OCI-LY7 (cell line): ENCODE measurements at regions of chr12 and their contacts with region 1.

Region 1: GRCh38 chr12:53757095-53757770 is 5.5 kb upstream of the CISTR start:
- DNase-seq: peak; percentile 87
- H3K4me3 ChIP-seq: peak overlapping the region; percentile 74
- H3K27ac ChIP-seq: peak overlapping the region; percentile 94
- H3K4me1 ChIP-seq: peaks cover 60% of the 10 kb centered on the region
- CTCF ChIP-seq: peak; percentile 97

Region 2: DNA sequence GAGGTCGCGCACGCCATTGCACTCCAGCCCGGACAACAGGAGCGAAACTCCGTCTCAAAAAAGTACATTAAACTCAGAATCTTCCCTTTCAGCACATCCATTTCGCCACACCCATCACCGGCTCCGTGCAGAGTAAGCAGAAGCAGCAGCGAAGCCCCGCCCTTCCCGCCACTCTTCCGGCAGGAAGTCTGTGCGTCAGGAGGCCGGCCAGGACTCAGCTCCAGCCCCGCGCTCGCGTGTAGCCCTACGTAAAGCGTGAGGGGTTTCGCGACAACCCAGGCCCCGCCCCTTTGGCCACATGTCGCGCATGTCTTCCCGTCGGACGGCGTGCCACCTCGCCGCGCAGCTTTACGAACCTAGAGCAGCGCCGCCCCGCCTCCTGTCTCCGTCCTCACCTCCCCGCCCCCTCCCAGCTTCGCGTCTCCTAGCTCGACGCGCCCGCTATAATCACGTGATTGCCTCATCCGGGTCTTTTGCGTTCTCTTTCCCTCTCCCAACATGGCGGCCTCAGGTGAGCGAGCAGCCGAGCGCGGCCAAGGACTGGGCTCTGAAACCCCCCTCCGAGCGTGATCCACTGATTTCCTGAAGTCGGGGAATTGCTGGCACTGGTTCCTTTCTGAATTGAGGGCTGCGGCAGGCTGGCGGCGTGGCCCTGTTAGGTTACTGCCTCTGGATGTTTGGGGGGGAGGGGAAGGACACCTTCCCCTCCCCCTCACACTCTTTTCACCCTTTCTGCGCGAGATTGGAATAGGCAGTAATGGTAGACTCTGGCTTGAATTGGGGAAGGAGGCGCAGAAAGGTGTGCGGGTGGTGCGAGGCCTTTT is 751.0 kb before region 1 on chr12 and contains the start of gene EIF4B:
- CTCF ChIA-PET with region 1: no interaction called
- POLR2A ChIA-PET with region 1: no interaction called
- intact Hi-C with region 1: loop called (anchors 10 kb)
- DNase-seq: peak; percentile 100
- H3K4me3 ChIP-seq: peak within 1 kb of the TSS; percentile 77
- H3K27ac ChIP-seq: peak within 1 kb of the TSS; percentile 78
- H3K4me1 ChIP-seq: peaks cover 47% of the 10 kb centered on the region
- CTCF ChIP-seq: no peak
- total RNA-seq, gene EIF4B: 645 and 872 TPM in 2 replicates

Region 3: DNA sequence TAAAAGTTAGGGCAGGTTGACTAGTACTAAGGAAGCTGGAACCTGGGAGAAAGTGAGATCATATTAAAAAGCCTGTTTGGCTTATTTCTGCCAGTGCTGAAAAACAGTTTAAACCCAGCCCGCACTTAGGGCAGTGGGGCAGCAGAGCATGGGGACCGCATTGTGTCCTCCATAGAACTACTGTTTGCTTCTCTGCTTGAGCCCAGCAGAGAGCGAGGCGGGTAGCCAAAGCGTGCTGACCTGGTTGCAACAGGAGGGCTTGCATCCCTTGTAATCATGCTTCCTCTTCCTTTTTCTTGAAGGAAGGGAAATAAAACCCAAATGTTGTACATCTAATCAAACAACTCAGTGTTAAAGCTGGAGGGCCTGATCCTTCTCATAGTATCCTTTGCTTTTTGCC is 98.9 kb after region 1 on chr12:
- CTCF ChIA-PET with region 1: no interaction called
- POLR2A ChIA-PET with region 1: no interaction called
- intact Hi-C with region 1: no loop called
- DNase-seq: no peak
- H3K4me3 ChIP-seq: no peak overlapping the region
- H3K27ac ChIP-seq: no peak overlapping the region
- H3K4me1 ChIP-seq: no peaks in the 10 kb centered on the region
- CTCF ChIP-seq: no peak

Region 4: GRCh38 chr12:53892760-53893159 is 135.5 kb after region 1 on chr12:
- CTCF ChIA-PET with region 1: no interaction called
- POLR2A ChIA-PET with region 1: no interaction called
- intact Hi-C with region 1: no loop called
- DNase-seq: no peak
- H3K4me3 ChIP-seq: no peak overlapping the region
- H3K27ac ChIP-seq: no peak overlapping the region
- H3K4me1 ChIP-seq: no peaks in the 10 kb centered on the region
- CTCF ChIP-seq: no peak

Region 5: DNA sequence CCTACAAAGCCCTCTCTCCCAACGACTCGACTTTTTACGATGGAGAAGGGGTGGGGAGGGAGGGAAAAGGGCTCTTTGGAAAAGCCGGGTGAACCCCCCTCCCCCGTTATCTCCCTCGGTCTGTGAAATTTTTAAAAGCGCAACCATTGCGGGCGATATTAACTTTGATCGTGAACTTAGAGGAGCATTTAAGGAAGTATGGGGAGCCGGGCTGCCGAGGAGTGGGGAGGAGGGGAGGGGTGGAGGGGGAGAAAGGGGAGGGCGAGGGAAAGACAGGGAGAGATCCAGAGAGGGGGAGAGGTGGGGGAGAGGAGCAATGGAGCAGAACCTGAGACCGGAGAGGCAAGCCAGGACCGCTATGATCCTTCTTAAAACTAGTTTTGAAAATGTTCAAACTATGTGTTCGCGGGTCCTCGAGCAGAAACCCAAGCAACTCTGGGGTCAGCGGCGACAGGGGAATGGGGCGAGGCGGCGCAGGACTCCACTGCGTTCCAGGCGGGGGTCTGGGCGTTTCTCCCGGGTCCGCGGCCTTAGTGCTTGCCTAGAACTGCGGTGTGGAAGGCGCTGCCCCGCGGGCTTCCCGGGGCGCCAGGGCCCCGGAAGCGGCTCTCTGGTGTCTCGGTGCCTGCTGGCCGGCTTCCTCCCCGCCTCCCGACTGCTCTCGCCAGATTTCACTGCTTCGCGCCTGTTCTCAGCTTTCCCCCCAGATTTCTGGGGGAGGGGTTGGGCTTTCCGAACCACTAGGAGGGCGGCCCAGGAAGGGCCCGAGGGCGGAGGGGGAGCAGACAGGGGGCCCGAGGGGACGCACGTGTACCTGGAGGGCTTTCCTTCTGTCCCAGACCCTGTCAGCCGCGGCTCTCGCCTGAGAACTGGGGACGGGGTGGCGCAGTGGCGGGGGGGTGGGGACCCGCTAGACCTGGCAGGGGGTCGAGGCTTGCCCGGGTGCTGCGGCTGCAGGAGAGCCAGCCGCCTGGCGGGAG is 217.1 kb after region 1 on chr12 and contains the start of gene HOTAIR:
- CTCF ChIA-PET with region 1: no interaction called
- POLR2A ChIA-PET with region 1: no interaction called
- intact Hi-C with region 1: loop called (anchors 5 kb)
- DNase-seq: peak; percentile 72
- H3K4me3 ChIP-seq: peak within 1 kb of the TSS; percentile 71
- H3K27ac ChIP-seq: peak within 1 kb of the TSS; percentile 83
- H3K4me1 ChIP-seq: peaks cover 34% of the 10 kb centered on the region
- CTCF ChIP-seq: no peak
- total RNA-seq, gene HOTAIR: 0.88 and 1.6 TPM in 2 replicates